GM12878 (cell line): ENCODE measurements at regions of chr11 and their contacts with region 1.

Region 1: DNA sequence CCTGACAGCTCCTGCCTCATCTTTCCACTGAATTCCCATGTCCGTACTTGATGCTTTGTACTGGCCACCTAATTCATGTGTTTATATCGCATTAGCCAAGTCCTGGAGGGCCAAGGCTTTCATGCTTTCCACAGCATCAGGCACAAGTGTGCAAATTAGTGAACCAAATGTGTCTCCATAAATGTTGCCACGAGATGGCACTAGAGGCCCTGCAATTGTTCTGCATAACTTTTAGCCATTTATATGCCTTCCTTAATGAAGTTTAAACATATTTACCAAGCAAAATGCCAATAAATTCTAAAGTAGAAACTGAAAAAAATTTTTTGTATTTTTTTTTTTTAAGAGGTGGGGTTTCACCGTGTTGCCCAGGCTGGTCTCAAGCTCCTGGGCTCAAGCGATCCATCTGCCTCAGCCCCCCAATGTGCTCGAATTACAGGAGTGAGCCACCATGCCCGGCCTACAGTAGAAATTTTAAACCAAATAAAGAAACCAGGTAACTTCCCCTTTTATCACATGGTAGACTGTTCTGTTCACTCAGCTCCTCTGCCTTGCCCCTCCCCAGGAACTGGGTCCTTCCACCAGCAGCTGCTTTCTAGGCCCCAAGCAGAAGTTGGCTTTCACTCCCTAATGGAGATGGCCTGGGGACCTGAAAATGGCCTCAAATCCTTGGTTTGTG is 20.8 kb upstream of the IL18BP start:
- DNase-seq: peak; percentile 30
- ATAC-seq: peak; percentile 92
- H3K4me3 ChIP-seq: no peak overlapping the region
- H3K27ac ChIP-seq: peak overlapping the region; percentile 13
- H3K4me1 ChIP-seq: peaks cover 10% of the 10 kb centered on the region
- H3K27me3 ChIP-seq: no peaks in the 10 kb centered on the region
- CTCF ChIP-seq: peak; percentile 45 to 77 (median 59); a peak in 5 of 6 replicates
- EP300 ChIP-seq: no peak
- POLR2A ChIP-seq: no peak
- RAD21 ChIP-seq: peak; percentile 85

Region 2: GRCh38 chr11:71928737-71929452 is 49.0 kb before region 1 on chr11 and contains the start of gene RNF121:
- CTCF ChIA-PET with region 1: interaction called, 49 read pairs
- POLR2A ChIA-PET with region 1: interaction called, 4 read pairs
- RAD21 ChIA-PET with region 1: interaction called, 24 read pairs
- SMC1A ChIA-PET with region 1: interaction called, 63 read pairs
- in situ Hi-C with region 1: no loop called
- intact Hi-C with region 1: no loop called
- DNase-seq: peak; percentile 92
- ATAC-seq: peak; percentile 87
- H3K4me3 ChIP-seq: peak within 1 kb of the TSS; percentile 86
- H3K27ac ChIP-seq: peak within 1 kb of the TSS; percentile 98
- H3K4me1 ChIP-seq: peaks cover 22% of the 10 kb centered on the region
- H3K27me3 ChIP-seq: no peaks in the 10 kb centered on the region
- CTCF ChIP-seq: no peak
- EP300 ChIP-seq: no peak
- POLR2A ChIP-seq: peak; percentile 96
- RAD21 ChIP-seq: no peak
- polyA plus RNA-seq, gene RNF121: 8.6 to 19.0 TPM

Region 3: GRCh38 chr11:71955898-71956456 is 21.9 kb before region 1 on chr11:
- CTCF ChIA-PET with region 1: interaction called, 13 read pairs
- POLR2A ChIA-PET with region 1: no interaction called
- RAD21 ChIA-PET with region 1: no interaction called
- SMC1A ChIA-PET with region 1: interaction called, 12 read pairs
- in situ Hi-C with region 1: no loop called
- intact Hi-C with region 1: no loop called
- DNase-seq: no peak
- ATAC-seq: peak; percentile 42
- H3K4me3 ChIP-seq: no peak overlapping the region
- H3K27ac ChIP-seq: no peak overlapping the region
- H3K4me1 ChIP-seq: no peaks in the 10 kb centered on the region; the same call in 1 of the 2 replicates
- H3K27me3 ChIP-seq: no peaks in the 10 kb centered on the region
- CTCF ChIP-seq: no peak
- EP300 ChIP-seq: no peak
- POLR2A ChIP-seq: no peak
- RAD21 ChIP-seq: no peak

Region 4: DNA sequence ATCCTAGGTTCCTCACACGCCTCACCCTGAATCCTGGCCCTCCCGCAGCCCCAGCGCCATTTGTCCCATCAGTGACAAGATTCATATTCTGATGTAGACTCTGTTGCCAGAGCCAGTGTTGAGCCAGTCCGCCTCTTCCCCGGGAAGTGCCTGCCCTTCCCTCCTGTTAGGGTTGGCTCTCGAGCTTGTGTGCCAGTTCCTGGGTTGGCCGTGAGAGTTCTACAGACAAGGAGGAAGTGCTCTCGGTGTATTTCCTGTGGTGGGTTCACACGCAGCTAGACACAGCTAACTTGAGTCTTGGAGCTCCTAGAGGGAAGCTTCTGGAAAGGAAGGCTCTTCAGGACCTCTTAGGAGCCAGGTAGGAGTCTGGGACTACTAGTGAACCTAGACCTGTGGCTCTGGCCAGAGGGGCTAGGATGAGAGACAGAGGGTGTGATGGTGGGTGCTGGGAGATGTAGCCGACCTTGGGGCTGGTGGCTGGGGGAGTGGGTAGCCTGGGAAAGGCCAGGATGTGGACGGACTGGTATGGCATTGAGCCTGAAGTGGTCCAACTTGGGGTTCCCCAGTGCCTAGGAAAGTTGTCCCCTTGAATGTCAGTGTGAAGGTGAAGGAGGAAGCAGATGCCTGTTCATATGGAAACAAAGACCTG is 20.9 kb after region 1 on chr11 and contains the start of gene IL18BP:
- CTCF ChIA-PET with region 1: interaction called, 22 read pairs
- POLR2A ChIA-PET with region 1: interaction called, 5 read pairs
- RAD21 ChIA-PET with region 1: interaction called, 21 read pairs
- SMC1A ChIA-PET with region 1: interaction called, 16 read pairs
- in situ Hi-C with region 1: no loop called
- intact Hi-C with region 1: no loop called
- DNase-seq: peak; percentile 44
- ATAC-seq: peak; percentile 54
- H3K4me3 ChIP-seq: peak within 1 kb of the TSS; percentile 50; the same call in 1 of the 2 replicates
- H3K27ac ChIP-seq: peak within 1 kb of the TSS; percentile 85
- H3K4me1 ChIP-seq: peaks cover 37% of the 10 kb centered on the region
- H3K27me3 ChIP-seq: no peaks in the 10 kb centered on the region
- CTCF ChIP-seq: no peak
- EP300 ChIP-seq: no peak
- POLR2A ChIP-seq: peak; percentile 59; the same call in 1 of the 2 replicates
- RAD21 ChIP-seq: no peak
- polyA plus RNA-seq, gene IL18BP: 2.6 to 3.5 TPM

Region 5: DNA sequence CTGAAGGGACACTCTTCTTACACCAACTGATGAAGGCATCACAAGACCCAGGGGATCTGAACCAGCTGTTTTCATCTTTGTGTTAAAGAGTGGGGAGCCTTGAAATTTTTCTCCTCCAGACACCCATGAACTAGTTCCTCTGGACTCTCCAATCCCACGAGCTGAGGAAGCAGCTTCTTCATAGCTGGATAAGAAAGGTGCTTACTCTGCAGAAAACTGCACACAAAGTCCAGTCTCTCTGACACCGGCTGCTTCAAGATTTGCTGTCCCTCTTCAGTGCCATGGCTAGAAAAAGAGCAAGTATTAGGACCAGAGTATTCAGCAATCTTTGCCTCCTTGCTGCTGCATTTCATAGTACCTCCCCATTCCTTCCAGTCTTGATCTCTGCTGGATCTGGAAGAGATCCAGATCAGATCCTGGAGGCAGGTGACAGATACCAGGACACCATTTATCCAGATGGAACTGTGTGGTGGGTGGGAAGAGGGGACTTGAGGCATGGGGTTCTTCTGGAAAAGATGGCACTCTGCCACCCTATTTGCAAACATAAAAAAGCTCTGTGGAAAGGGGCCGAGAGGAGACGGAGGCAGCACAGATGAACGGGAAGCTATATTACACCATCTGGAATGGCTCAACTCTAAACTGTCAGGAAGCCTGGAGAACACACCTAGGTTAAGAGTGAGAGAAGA is 46.3 kb after region 1 on chr11:
- CTCF ChIA-PET with region 1: interaction called, 138 read pairs
- POLR2A ChIA-PET with region 1: no interaction called
- RAD21 ChIA-PET with region 1: interaction called, 22 read pairs
- SMC1A ChIA-PET with region 1: interaction called, 33 read pairs
- in situ Hi-C with region 1: no loop called
- intact Hi-C with region 1: no loop called
- DNase-seq: no peak
- ATAC-seq: no peak
- H3K4me3 ChIP-seq: no peak overlapping the region
- H3K27ac ChIP-seq: no peak overlapping the region
- H3K4me1 ChIP-seq: no peaks in the 10 kb centered on the region
- H3K27me3 ChIP-seq: no peaks in the 10 kb centered on the region
- CTCF ChIP-seq: no peak
- EP300 ChIP-seq: no peak
- POLR2A ChIP-seq: no peak
- RAD21 ChIP-seq: no peak

Region 6: GRCh38 chr11:72091005-72091691 is 113.3 kb after region 1 on chr11:
- CTCF ChIA-PET with region 1: interaction called, 81 read pairs
- POLR2A ChIA-PET with region 1: interaction called, 3 read pairs
- RAD21 ChIA-PET with region 1: interaction called, 30 read pairs
- SMC1A ChIA-PET with region 1: interaction called, 47 read pairs
- in situ Hi-C with region 1: no loop called
- intact Hi-C with region 1: loop called (anchors 1 kb)
- DNase-seq: no peak
- ATAC-seq: peak; percentile 99
- H3K4me3 ChIP-seq: no peak overlapping the region
- H3K27ac ChIP-seq: no peak overlapping the region
- H3K4me1 ChIP-seq: no peaks in the 10 kb centered on the region
- H3K27me3 ChIP-seq: no peaks in the 10 kb centered on the region
- CTCF ChIP-seq: peak; percentile 84 to 91 (median 89)
- EP300 ChIP-seq: no peak
- POLR2A ChIP-seq: peak; percentile 33
- RAD21 ChIP-seq: peak; percentile 93